ENCODE measurements at regions of chr18 and their contacts with region 1.

Region 1: GRCh38 chr18:35513181-35513936 is 15.6 kb upstream of the INO80C start:
- DNase-seq: peak in 4 of 6 donors; percentile 17 to 54 (median 44)
- ATAC-seq: peak; percentile 66 to 82 (median 80)
- H3K4me3 ChIP-seq: no peak overlapping the region
- H3K27ac ChIP-seq: peak overlapping the region; percentile 20 to 68 (median 37)
- H3K4me1 ChIP-seq: peaks cover 0 to 5% (median 0%) of the 10 kb centered on the region in 3 donors
- H3K27me3 ChIP-seq: no peaks in the 10 kb centered on the region
- CTCF ChIP-seq: no peak

Region 2: GRCh38 chr18:35407871-35408481 is 105.4 kb before region 1 on chr18:
- intact Hi-C with region 1: loop called in 1 of 3 experiments (anchors 10 kb)
- DNase-seq: peak in 3 of 6 donors; percentile 26 to 51 (median 41)
- ATAC-seq: peak; percentile 91 to 98 (median 96)
- H3K4me3 ChIP-seq: no peak overlapping the region
- H3K27ac ChIP-seq: no peak overlapping the region
- H3K4me1 ChIP-seq: no peaks in the 10 kb centered on the region
- H3K27me3 ChIP-seq: peaks cover 0 to 3% (median 1%) of the 10 kb centered on the region in 4 donors
- CTCF ChIP-seq: peak; percentile 59 to 74 (median 66)

Region 3: DNA sequence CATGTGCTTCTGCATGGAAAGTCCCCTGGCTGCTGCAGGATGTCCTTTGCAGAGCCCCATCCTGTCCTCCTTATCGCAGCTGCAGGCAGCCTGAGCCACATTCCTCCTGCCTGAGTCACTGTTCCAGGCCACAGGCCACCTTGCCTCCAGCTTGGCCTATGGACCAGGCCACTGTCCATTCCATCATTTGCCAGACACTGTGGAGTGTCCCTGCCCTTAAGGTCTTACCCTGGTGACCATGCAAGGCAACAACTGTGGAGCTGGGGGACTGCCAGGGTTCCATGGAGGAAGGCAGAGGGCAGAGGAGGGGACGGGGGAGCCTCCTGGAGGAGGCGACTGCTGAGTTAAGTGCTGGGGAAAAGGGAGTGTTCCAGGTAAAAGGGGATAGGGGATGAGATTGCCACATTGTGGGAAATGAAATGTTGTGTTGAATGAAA is 54.3 kb before region 1 on chr18:
- intact Hi-C with region 1: no loop called
- DNase-seq: peak in 3 of 6 donors; percentile 18 to 57 (median 44)
- ATAC-seq: peak; percentile 50 to 92 (median 76)
- H3K4me3 ChIP-seq: no peak overlapping the region
- H3K27ac ChIP-seq: no peak overlapping the region
- H3K4me1 ChIP-seq: peaks cover 0 to 4% (median 3%) of the 10 kb centered on the region in 3 donors
- H3K27me3 ChIP-seq: no peaks in the 10 kb centered on the region
- CTCF ChIP-seq: no peak

Region 4: GRCh38 chr18:36158261-36158867 is 645.0 kb after region 1 on chr18:
- intact Hi-C with region 1: no loop called
- DNase-seq: no peak
- ATAC-seq: peak in 1 of 4 donors; percentile 39
- H3K4me3 ChIP-seq: no peak overlapping the region
- H3K27ac ChIP-seq: no peak overlapping the region
- H3K4me1 ChIP-seq: no peaks in the 10 kb centered on the region
- H3K27me3 ChIP-seq: no peaks in the 10 kb centered on the region
- CTCF ChIP-seq: no peak

Measured in pancreas (tissue), 10 donors.